Heart left ventricle (tissue), 16 donors: ENCODE measurements at regions of chr1 and their contacts with region 1.

Region 1: GRCh38 chr1:172826096-172826743 is 167.3 kb downstream of the FASLG start:
- DNase-seq: peak in 1 of 5 donors; percentile 25
- ATAC-seq: peak; percentile 83 to 94 (median 88)
- H3K4me3 ChIP-seq: peak overlapping the region in 8 of 12 donors; percentile 11 to 28 (median 20)
- H3K27ac ChIP-seq: peak overlapping the region; percentile 2 to 78 (median 60)
- H3K4me1 ChIP-seq: peaks cover 0 to 31% (median 4%) of the 10 kb centered on the region in 12 donors
- H3K27me3 ChIP-seq: no peaks in the 10 kb centered on the region
- CTCF ChIP-seq: peak; percentile 41 to 75 (median 59)
- POLR2A ChIP-seq: no peak

Region 2: GRCh38 chr1:172976222-172977041 is 150.2 kb after region 1 on chr1:
- intact Hi-C with region 1: no loop called
- DNase-seq: no peak
- ATAC-seq: peak in 3 of 4 donors; percentile 31 to 64 (median 46)
- H3K4me3 ChIP-seq: no peak overlapping the region
- H3K27ac ChIP-seq: no peak overlapping the region
- H3K4me1 ChIP-seq: no peaks in the 10 kb centered on the region
- H3K27me3 ChIP-seq: no peaks in the 10 kb centered on the region
- CTCF ChIP-seq: no peak
- POLR2A ChIP-seq: no peak

Region 3: GRCh38 chr1:173122958-173123852 is 297.0 kb after region 1 on chr1:
- intact Hi-C with region 1: loop called in 1 of 10 experiments (anchors 10 kb)
- DNase-seq: peak; percentile 66 to 77 (median 75)
- ATAC-seq: peak; percentile 82 to 97 (median 96)
- H3K4me3 ChIP-seq: peak overlapping the region in 10 of 12 donors; percentile 7 to 48 (median 28)
- H3K27ac ChIP-seq: peak overlapping the region; percentile 59 to 94 (median 76)
- H3K4me1 ChIP-seq: peaks cover 0 to 26% (median 11%) of the 10 kb centered on the region in 12 donors
- H3K27me3 ChIP-seq: no peaks in the 10 kb centered on the region
- CTCF ChIP-seq: no peak
- POLR2A ChIP-seq: no peak

Region 4: GRCh38 chr1:173202430-173203145 is 376.4 kb after region 1 on chr1:
- intact Hi-C with region 1: loop called (anchors 1 to 2 kb)
- DNase-seq: peak in 2 of 5 donors; percentile 18 to 27
- ATAC-seq: peak; percentile 49 to 79 (median 76)
- H3K4me3 ChIP-seq: no peak overlapping the region
- H3K27ac ChIP-seq: no peak overlapping the region
- H3K4me1 ChIP-seq: peaks cover 0 to 34% (median 10%) of the 10 kb centered on the region in 12 donors
- H3K27me3 ChIP-seq: no peaks in the 10 kb centered on the region
- CTCF ChIP-seq: peak; percentile 42 to 79 (median 65)
- POLR2A ChIP-seq: no peak

Region 5: GRCh38 chr1:173409613-173410012 is 583.4 kb after region 1 on chr1:
- intact Hi-C with region 1: loop called in 1 of 10 experiments (anchors 5 kb)
- DNase-seq: peak; percentile 51 to 71 (median 56)
- ATAC-seq: peak in 3 of 4 donors; percentile 63 to 65 (median 64)
- H3K4me3 ChIP-seq: no peak overlapping the region
- H3K27ac ChIP-seq: no peak overlapping the region
- H3K4me1 ChIP-seq: peaks cover 0 to 54% (median 18%) of the 10 kb centered on the region in 12 donors
- H3K27me3 ChIP-seq: no peaks in the 10 kb centered on the region
- CTCF ChIP-seq: no peak
- POLR2A ChIP-seq: no peak